Calu3 (cell line): ENCODE measurements at regions of chr1 and their contacts with region 1.

Region 1: DNA sequence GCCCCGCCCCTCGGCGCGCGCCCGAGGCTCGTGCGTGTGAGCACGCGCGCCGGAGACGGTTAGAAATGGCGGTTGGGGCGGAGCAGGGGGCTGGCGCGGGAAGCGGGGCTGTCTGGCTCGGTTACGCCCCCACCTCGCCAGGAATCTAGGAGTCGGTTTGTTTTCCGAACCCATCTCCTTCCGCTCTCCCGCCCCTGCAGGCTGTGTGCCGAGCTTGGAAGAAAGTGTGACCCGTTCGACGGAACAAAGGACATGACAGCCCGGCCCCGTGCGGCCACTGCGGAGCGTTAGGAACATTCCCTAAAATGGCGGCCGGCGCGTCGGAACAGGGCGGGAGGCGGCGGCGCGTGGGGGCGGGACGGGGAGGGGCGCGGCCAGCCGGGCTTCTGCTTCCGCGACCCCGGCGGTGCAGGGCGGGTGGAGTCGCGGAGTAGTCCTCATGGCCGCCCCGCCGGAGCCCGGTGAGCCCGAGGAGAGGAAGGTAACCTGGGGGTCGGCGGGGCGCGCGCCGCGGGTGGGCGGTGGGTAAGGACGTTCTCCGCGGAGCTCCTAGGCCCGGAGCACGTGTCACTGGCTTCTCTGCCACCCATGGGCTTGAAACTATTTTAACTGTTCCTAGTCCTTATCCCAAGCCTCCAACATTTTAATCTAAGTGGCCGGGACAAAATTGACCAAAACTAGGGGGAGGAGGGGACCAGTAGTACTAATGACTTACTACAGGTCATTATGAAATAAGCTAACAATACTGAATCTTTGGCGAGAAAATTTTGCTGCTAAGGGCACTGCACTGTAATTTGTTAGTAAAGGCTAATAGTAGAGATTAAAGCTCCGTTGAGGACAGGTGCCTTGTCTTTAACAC is at the start of gene COX20:
- DNase-seq: peak; percentile 84
- H3K4me3 Mint-ChIP-seq: peak within 1 kb of the TSS; percentile 84
- H3K27ac Mint-ChIP-seq: peak within 1 kb of the TSS; percentile 100
- H3K4me1 Mint-ChIP-seq: peaks cover 59% of the 10 kb centered on the region
- H3K27me3 Mint-ChIP-seq: no peaks in the 10 kb centered on the region
- CTCF ChIP-seq: no peak
- total RNA-seq, gene COX20: 22.6 and 32.8 TPM in 2 replicates

Region 2: GRCh38 chr1:244869138-244869827 is 33.8 kb after region 1 on chr1:
- CTCF ChIA-PET with region 1: no interaction called
- intact Hi-C with region 1: no loop called
- DNase-seq: no peak
- H3K4me3 Mint-ChIP-seq: no peak overlapping the region
- H3K27ac Mint-ChIP-seq: no peak overlapping the region
- H3K4me1 Mint-ChIP-seq: peaks cover 8% of the 10 kb centered on the region
- H3K27me3 Mint-ChIP-seq: no peaks in the 10 kb centered on the region
- CTCF ChIP-seq: no peak

Region 3: GRCh38 chr1:244970661-244971551 is 135.4 kb after region 1 on chr1:
- CTCF ChIA-PET with region 1: interaction called, 10 read pairs
- intact Hi-C with region 1: loop called (anchors 5 kb)
- DNase-seq: peak; percentile 97
- H3K4me3 Mint-ChIP-seq: peak overlapping the region; percentile 96
- H3K27ac Mint-ChIP-seq: peak overlapping the region; percentile 100
- H3K4me1 Mint-ChIP-seq: peaks cover 20% of the 10 kb centered on the region
- H3K27me3 Mint-ChIP-seq: no peaks in the 10 kb centered on the region
- CTCF ChIP-seq: peak; percentile 58